Activated CD8-positive, alpha-beta T cell treated with anti-CD3 and anti-CD28 coated beads for 36 hours (primary cell): ENCODE measurements at regions of chr14 and their contacts with region 1.

Region 1: DNA sequence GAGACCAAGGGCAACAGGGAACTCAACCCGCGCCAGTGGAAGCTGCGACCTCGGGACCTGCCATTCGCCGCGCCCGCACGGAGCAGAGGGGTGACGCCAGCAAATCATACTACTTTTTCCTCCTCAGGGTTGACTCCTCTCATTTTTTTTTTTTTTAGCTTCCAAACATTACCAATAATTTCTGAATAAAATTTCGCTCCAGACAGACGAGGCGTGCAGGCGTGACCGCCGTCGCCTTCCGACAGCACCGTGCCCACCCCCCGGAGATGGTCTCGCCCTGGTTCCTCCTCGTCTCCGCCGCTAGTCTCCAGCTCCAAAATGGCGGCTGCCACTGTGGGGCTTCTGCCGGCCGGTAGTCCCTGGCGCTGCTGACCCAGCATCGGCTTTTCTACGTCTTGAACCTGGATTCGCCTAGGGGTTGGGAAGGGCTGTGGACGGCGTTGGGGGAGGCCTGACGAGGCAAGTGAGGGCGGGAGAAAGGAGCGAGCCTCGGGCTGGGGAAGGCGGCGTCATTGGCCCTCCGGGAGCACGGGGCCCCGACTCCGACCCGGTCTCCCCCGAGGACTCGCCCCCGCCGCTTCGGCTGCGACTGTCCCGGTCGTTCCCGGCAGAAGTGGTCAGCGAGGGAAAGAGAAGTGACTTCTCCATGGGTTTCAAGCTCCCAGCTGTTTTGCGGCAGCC is at the starts of genes CPSF2 and NDUFB1:
- DNase-seq: peak; percentile 87
- ATAC-seq: peak; percentile 90
- H3K4me3 Mint-ChIP-seq: peak within 1 kb of the TSS; percentile 92
- H3K27ac Mint-ChIP-seq: peak within 1 kb of the TSS; percentile 99
- H3K4me1 Mint-ChIP-seq: peaks cover 35% of the 10 kb centered on the region
- H3K27me3 Mint-ChIP-seq: no peaks in the 10 kb centered on the region
- CTCF ChIP-seq: no peak
- total RNA-seq, gene CPSF2: 96.2 to 103 TPM
- total RNA-seq, gene NDUFB1: 102 TPM

Region 2: GRCh38 chr14:91925001-91925726 is 196.6 kb before region 1 on chr14:
- CTCF ChIA-PET with region 1: no interaction called
- POLR2A ChIA-PET with region 1: no interaction called
- intact Hi-C with region 1: no loop called
- DNase-seq: no peak
- ATAC-seq: no peak
- H3K4me3 Mint-ChIP-seq: no peak overlapping the region
- H3K27ac Mint-ChIP-seq: no peak overlapping the region
- H3K4me1 Mint-ChIP-seq: no peaks in the 10 kb centered on the region
- H3K27me3 Mint-ChIP-seq: no peaks in the 10 kb centered on the region
- CTCF ChIP-seq: no peak

Region 3: DNA sequence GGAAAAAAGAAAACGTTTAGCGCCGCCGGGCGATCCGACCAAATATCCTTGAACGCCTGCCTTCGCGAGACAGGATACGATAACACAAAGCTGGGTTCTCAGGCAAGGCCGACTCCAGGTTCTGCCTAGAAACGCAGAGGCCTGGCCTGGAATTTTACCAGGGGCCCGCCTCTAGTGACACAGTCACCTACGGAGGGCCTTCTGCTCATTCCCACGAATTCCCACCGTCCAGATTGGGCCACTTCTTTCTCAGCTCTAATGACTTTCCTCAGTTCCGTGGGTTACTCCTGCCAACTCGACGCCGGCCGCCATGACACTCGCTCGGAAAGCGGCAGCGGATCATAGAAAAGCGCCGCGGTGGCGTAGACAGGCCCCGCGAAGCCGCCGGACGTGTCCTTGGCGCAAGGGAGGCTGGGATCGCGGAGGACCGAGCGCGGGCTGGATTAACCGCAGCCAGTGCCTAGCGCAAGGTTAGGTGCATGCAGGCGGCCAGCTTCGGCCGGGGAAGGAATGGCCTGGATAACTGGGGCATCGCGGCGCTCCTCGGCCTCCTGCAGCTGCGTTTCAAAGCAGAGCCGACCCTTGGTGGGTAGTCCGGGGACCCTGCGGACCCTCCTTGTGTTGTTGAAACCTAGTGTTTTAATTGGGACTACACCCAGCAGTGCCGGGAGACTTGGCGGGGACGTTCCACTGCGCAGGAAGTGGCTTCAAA is 81.9 kb before region 1 on chr14 and contains the start of gene TRIP11:
- CTCF ChIA-PET with region 1: no interaction called
- POLR2A ChIA-PET with region 1: interaction called, 15 read pairs
- intact Hi-C with region 1: no loop called
- DNase-seq: peak; percentile 97
- ATAC-seq: peak; percentile 94
- H3K4me3 Mint-ChIP-seq: peak within 1 kb of the TSS; percentile 98
- H3K27ac Mint-ChIP-seq: peak within 1 kb of the TSS; percentile 93
- H3K4me1 Mint-ChIP-seq: peaks cover 32% of the 10 kb centered on the region
- H3K27me3 Mint-ChIP-seq: no peaks in the 10 kb centered on the region
- CTCF ChIP-seq: no peak
- total RNA-seq, gene TRIP11: 33.5 to 35.5 TPM

Region 4: DNA sequence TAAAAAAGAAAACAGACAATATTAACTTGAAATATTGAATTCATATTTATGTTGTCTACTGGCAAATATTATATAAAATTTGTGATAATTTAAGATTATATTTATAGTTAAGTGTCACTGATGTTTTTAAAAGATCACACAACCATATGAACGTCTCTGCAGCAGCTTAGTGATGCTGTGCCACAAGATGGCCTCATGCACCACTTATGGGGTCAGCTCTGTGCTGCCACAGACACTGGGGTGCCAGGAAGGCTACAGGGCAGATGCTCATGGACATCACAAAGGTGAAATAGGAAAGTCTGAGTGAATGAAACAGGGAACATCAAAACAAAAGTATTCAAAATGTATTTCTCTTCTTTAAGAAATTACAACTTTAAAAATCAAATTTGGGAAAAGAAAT is 28.5 kb before region 1 on chr14:
- CTCF ChIA-PET with region 1: no interaction called
- POLR2A ChIA-PET with region 1: interaction called, 10 read pairs
- intact Hi-C with region 1: no loop called
- DNase-seq: peak; percentile 38
- ATAC-seq: peak; percentile 47
- H3K4me3 Mint-ChIP-seq: no peak overlapping the region
- H3K27ac Mint-ChIP-seq: no peak overlapping the region
- H3K4me1 Mint-ChIP-seq: no peaks in the 10 kb centered on the region
- H3K27me3 Mint-ChIP-seq: no peaks in the 10 kb centered on the region
- CTCF ChIP-seq: no peak

Region 5: DNA sequence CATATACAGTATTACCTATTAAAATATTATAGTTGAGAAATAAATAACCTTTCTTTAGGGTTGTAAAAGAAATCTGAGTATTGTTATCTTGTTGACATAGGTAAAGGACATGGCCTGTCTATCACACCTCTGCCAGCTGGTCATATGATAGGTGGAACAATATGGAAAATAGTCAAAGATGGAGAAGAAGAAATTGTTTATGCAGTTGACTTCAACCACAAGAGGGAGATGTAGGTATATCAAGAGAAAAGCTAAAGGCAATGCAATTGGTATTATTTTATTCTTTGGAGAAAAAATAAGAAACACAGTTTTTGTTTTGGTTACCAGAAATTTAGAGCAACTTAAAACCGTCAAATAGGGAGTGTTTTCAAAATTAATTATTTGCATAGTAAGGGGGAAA is 13.5 kb after region 1 on chr14:
- CTCF ChIA-PET with region 1: interaction called, 4 read pairs
- POLR2A ChIA-PET with region 1: interaction called, 10 read pairs
- intact Hi-C with region 1: no loop called
- DNase-seq: no peak
- ATAC-seq: no peak
- H3K4me3 Mint-ChIP-seq: no peak overlapping the region
- H3K27ac Mint-ChIP-seq: no peak overlapping the region
- H3K4me1 Mint-ChIP-seq: peaks cover 2% of the 10 kb centered on the region
- H3K27me3 Mint-ChIP-seq: no peaks in the 10 kb centered on the region
- CTCF ChIP-seq: peak; percentile 55